Heart right ventricle (tissue), 16 donors: ENCODE measurements at regions of chr10 and their contacts with region 1.

Region 1: GRCh38 chr10:59240582-59241183 is 64.2 kb downstream of the PHYHIPL start:
- DNase-seq: peak in 1 of 2 donors; percentile 21
- ATAC-seq: no peak
- H3K4me3 ChIP-seq: no peak overlapping the region
- H3K27ac ChIP-seq: no peak overlapping the region
- H3K4me1 ChIP-seq: peaks cover 0 to 4% (median 0%) of the 10 kb centered on the region in 9 donors
- H3K27me3 ChIP-seq: no peaks in the 10 kb centered on the region
- CTCF ChIP-seq: peak; percentile 48 to 84 (median 65)

Region 2: GRCh38 chr10:59465088-59465487 is 224.4 kb after region 1 on chr10:
- intact Hi-C with region 1: loop called in 8 of 10 experiments (anchors 5 to 10 kb)
- DNase-seq: peak in 1 of 2 donors; percentile 19
- ATAC-seq: peak in 2 of 8 donors; percentile 38 to 42
- H3K4me3 ChIP-seq: no peak overlapping the region
- H3K27ac ChIP-seq: no peak overlapping the region
- H3K4me1 ChIP-seq: peaks cover 0 to 8% (median 0%) of the 10 kb centered on the region in 9 donors
- H3K27me3 ChIP-seq: no peaks in the 10 kb centered on the region
- CTCF ChIP-seq: peak in 8 of 9 donors; percentile 12 to 63 (median 48)

Region 3: GRCh38 chr10:59580026-59580863 is 339.6 kb after region 1 on chr10:
- intact Hi-C with region 1: loop called (anchors 2 to 10 kb)
- DNase-seq: no peak
- ATAC-seq: peak in 5 of 8 donors; percentile 54 to 59 (median 56)
- H3K4me3 ChIP-seq: no peak overlapping the region
- H3K27ac ChIP-seq: peak overlapping the region in 3 of 10 donors; percentile 11 to 35 (median 24)
- H3K4me1 ChIP-seq: peaks cover 0 to 29% (median 0%) of the 10 kb centered on the region in 9 donors
- H3K27me3 ChIP-seq: no peaks in the 10 kb centered on the region
- CTCF ChIP-seq: peak; percentile 4 to 79 (median 52)

Region 4: GRCh38 chr10:59617996-59618395 is 377.3 kb after region 1 on chr10:
- intact Hi-C with region 1: loop called in 9 of 10 experiments (anchors 2 to 10 kb)
- DNase-seq: no peak
- ATAC-seq: no peak
- H3K4me3 ChIP-seq: no peak overlapping the region
- H3K27ac ChIP-seq: peak overlapping the region in 1 of 10 donors; percentile 44
- H3K4me1 ChIP-seq: peaks cover 0 to 11% (median 0%) of the 10 kb centered on the region in 9 donors
- H3K27me3 ChIP-seq: no peaks in the 10 kb centered on the region
- CTCF ChIP-seq: no peak

Region 5: DNA sequence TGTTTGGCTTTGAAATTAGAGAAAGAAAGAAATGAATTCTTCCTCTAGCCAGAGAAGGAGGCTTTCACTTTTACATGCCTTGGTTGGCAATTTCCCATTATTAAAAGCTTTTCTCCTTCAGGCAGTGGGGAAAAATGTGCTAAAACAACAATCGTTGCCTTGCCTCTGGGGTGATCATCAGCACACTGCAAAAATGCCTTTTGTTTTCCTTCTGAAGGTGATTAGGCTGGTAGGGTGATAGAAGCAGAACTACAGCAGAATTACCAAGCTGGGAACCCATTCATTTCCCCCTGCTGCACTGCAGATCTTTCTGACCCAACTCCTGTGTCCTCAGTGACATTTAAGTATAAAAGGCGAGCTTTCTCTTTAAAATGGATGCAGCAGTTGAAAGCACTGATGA is 1126.7 kb after region 1 on chr10:
- intact Hi-C with region 1: no loop called
- DNase-seq: no peak
- ATAC-seq: no peak
- H3K4me3 ChIP-seq: no peak overlapping the region
- H3K27ac ChIP-seq: no peak overlapping the region
- H3K4me1 ChIP-seq: no peaks in the 10 kb centered on the region
- H3K27me3 ChIP-seq: no peaks in the 10 kb centered on the region
- CTCF ChIP-seq: no peak